Activated T-helper 1 cell treated with anti-CD3 and anti-CD28 coated beads, Interleukin-12 subunit alpha, Interleukin-12 subunit beta, Interleukin-2, Interleukin-4 antibody, amounts not matched to agents 30 ng/mL and 10 ng/mL and 1 ng/mL, durations not matched to agents 14 hours and 24 hours and 36 hours (primary cell): ENCODE measurements at regions of chr4 and their contacts with region 1.

Region 1: GRCh38 chr4:42151568-42152506 is 618 bp downstream of the BEND4 start:
- DNase-seq: no peak
- H3K4me3 Mint-ChIP-seq: no peak overlapping the region
- H3K27ac Mint-ChIP-seq: no peak overlapping the region
- H3K4me1 Mint-ChIP-seq: peaks cover 12% of the 10 kb centered on the region
- H3K27me3 Mint-ChIP-seq: peaks cover 49% of the 10 kb centered on the region

Region 2: DNA sequence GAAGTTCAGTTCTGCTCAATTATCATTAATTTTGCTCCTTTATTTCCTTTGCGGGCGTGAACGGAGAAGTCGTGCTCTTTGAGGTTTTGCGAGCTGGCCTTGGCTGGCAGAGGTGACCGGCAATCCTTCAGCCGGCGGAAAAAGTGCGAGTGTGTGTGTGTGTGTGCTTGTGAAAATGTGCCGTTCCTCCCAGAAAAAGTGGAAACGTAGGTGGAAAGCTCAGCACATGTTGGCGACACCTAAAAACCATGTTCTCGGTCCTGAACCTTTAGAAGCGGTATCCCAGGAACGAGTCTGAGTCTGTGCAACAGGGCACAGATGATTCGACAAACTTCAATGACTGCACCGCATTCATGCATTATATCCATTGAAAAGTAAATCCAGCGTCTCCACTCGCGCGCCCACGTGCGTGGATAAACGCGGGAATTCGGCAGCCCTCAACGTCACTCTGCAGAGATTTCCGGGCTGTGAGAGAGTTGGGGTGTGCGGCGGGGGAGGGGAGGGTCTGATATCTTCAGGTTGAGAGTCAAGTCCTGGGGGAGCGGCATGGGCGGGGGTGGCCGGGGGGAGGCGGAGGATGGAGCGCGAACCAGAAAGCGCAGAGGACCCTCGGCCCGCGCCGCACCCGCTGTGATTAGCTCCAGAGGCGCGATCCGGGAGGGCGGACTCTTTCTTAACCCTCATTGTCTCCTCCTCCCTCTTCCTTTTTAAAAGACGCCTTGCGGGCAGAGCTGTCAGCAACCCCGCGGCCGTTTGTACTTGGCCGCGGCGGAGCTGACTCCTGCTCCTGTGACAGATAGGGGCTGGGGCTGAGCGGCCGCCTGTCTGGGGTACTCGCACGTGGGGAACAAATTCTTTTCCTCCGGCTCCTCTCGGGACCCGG is 245.2 kb after region 1 on chr4 and contains the start of gene SHISA3:
- intact Hi-C with region 1: loop called (anchors 2 kb)
- DNase-seq: no peak
- H3K4me3 Mint-ChIP-seq: peak within 1 kb of the TSS; percentile 80
- H3K27ac Mint-ChIP-seq: peak within 1 kb of the TSS; percentile 40
- H3K4me1 Mint-ChIP-seq: peaks cover 17% of the 10 kb centered on the region
- H3K27me3 Mint-ChIP-seq: peaks cover 57% of the 10 kb centered on the region
- total RNA-seq, gene SHISA3: not detected in 2 replicates